Endothelial cell of umbilical vein (primary cell): ENCODE measurements at regions of chr6 and their contacts with region 1.

Region 1: GRCh38 chr6:42315991-42316378 is 98.3 kb upstream of the MRPS10 start:
- DNase-seq: peak; percentile 82
- H3K4me3 ChIP-seq: no peak overlapping the region
- H3K27ac ChIP-seq: peak overlapping the region; percentile 51
- H3K4me1 ChIP-seq: peaks cover 21% of the 10 kb centered on the region
- H3K27me3 ChIP-seq: no peaks in the 10 kb centered on the region
- CTCF ChIP-seq: no peak
- POLR2A ChIP-seq: no peak

Region 2: GRCh38 chr6:42294759-42295158 is 21.2 kb before region 1 on chr6:
- CTCF ChIA-PET with region 1: interaction called, 13 read pairs
- POLR2A ChIA-PET with region 1: no interaction called
- dilution Hi-C with region 1: no loop called
- intact Hi-C with region 1: loop called (anchors 2 kb)
- DNase-seq: peak; percentile 13
- H3K4me3 ChIP-seq: no peak overlapping the region
- H3K27ac ChIP-seq: no peak overlapping the region
- H3K4me1 ChIP-seq: peaks cover 17% of the 10 kb centered on the region
- H3K27me3 ChIP-seq: no peaks in the 10 kb centered on the region
- CTCF ChIP-seq: no peak
- POLR2A ChIP-seq: no peak

Region 3: GRCh38 chr6:42338663-42339218 is 22.8 kb after region 1 on chr6:
- CTCF ChIA-PET with region 1: interaction called, 3 read pairs
- POLR2A ChIA-PET with region 1: no interaction called
- dilution Hi-C with region 1: no loop called
- intact Hi-C with region 1: loop called (anchors 1 kb)
- DNase-seq: peak; percentile 84
- H3K4me3 ChIP-seq: peak overlapping the region in 1 of 3 experiments; percentile 25
- H3K27ac ChIP-seq: peak overlapping the region; percentile 68
- H3K4me1 ChIP-seq: peaks cover 18% of the 10 kb centered on the region
- H3K27me3 ChIP-seq: no peaks in the 10 kb centered on the region
- CTCF ChIP-seq: no peak
- POLR2A ChIP-seq: no peak